ENCODE measurements at regions of chr2 and their contacts with region 1.

Region 1: DNA sequence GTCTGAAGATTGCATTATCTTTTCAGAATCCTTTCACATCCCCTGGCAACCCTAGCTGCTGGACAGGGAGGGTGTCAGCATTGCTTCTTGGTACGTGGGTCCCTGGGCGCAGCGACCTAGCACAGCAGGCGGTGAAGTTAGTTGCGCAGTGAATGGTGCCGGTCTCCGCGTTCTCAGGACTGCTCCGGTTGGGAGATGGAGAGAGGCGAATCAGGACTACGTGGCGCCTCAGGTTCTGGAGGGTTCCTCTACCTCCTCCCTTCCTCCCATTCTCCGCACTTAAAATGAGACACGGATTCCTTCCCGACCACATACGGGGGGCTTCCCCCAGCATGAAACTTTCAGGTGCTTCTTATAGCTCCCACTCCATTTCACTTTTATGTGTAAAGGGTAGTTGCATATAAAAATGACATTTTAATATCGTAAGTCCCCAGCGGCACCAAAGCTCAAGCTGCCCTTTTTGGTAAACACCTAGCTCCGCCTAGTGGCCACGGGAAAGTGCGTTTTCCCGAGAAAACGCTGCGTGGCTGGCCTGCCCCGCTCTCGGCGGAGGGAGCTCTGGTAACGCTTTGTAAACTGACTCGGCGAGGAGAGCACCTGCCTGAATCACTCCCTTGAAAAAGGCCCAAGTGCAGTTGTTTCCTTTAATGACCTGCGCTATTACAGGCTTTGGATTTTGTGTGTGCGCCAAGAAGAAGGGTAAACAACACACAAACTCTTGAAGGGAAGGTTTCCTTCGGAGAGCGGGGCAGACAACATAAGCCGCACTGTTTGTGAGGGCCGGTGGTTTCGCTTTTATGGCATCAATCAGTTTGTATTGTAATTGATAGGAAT is 32.9 kb upstream of the INHBB start:
- DNase-seq: peak; percentile 77 to 89 (median 84)
- H3K4me3 ChIP-seq: peak overlapping the region; percentile 23 to 73 (median 55)
- H3K27ac ChIP-seq: peak overlapping the region in 27 of 59 donors; percentile 8 to 80 (median 57)
- H3K27me3 ChIP-seq: no peaks in the 10 kb centered on the region
- CTCF ChIP-seq: peak; percentile 1 to 98 (median 93)

Region 2: GRCh38 chr2:120109186-120110061 is 203.7 kb before region 1 on chr2:
- intact Hi-C with region 1: loop called in 1 of 2 experiments (anchors 5 kb)
- DNase-seq: no peak
- H3K4me3 ChIP-seq: no peak overlapping the region
- H3K27ac ChIP-seq: peak overlapping the region in 1 of 59 donors; percentile 22
- H3K27me3 ChIP-seq: no peaks in the 10 kb centered on the region
- CTCF ChIP-seq: peak; percentile 30 to 82 (median 62)

Region 3: DNA sequence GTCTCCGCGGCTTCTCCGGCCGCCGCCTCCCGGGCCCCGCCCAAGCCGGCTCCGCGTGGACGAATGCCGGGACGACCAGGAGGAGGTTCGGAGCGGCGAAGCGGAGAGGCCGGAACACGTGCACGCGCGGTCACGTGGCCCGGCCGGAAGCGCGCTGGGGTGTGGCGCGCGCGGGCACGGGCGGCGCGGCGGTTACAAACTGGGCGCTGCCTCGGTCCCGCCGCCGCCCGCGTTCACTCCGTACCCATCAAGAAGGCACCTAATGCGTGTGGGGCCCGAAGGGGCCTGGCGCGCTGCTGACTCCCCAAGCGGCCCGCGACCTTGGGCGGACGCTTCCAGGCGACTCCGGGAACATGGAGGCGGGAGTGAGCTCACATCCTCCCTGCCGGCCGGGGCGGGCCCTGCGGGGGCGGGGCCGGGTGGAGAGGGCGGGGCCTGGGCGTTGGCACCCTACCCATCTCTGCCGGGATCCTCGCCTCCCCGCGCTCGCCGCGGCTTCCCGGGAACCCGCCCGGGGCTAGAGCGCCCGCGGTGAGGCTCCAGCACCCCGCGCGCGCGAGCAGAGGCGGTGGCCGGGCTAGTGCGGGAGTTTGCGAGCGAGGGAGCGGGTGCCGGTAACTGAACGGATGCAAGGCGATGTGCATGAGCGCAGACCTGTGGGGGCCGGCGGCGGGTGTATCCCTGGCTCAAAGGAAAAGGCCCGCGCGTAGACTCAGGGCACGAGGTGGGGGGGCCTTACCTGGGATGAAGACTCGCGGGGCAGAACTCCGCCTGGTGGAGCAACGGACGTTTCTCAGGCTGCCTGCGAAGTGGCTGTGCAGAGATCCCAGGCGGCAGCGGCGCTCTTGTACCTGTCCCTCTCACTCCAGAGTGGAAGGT is 89.8 kb before region 1 on chr2 and contains the start of gene TMEM185B:
- intact Hi-C with region 1: loop called in 1 of 2 experiments (anchors 10 kb)
- DNase-seq: peak; percentile 80 to 95 (median 86)
- H3K4me3 ChIP-seq: peak within 1 kb of the TSS; percentile 61 to 90 (median 80)
- H3K27ac ChIP-seq: peak within 1 kb of the TSS in 57 of 59 donors; percentile 75 to 96 (median 90)
- H3K27me3 ChIP-seq: no peaks in the 10 kb centered on the region
- CTCF ChIP-seq: peak in 41 of 56 donors; percentile 5 to 65 (median 25)
- total RNA-seq, gene TMEM185B: 11.4 to 24.4 (median 15.6) TPM

Region 4: GRCh38 chr2:120252225-120253021 is 60.7 kb before region 1 on chr2 and contains the start of gene RALB:
- intact Hi-C with region 1: loop called (anchors 1 kb)
- DNase-seq: peak; percentile 99 to 100 (median 100)
- H3K4me3 ChIP-seq: peak within 1 kb of the TSS; percentile 60 to 98 (median 82)
- H3K27ac ChIP-seq: peak within 1 kb of the TSS in 58 of 59 donors; percentile 17 to 95 (median 82)
- H3K27me3 ChIP-seq: no peaks in the 10 kb centered on the region
- CTCF ChIP-seq: peak in 7 of 56 donors; percentile 2 to 54 (median 8)
- total RNA-seq, gene RALB: 29.9 to 98.4 (median 61.4) TPM